Spleen (tissue), 13 donors: ENCODE measurements at regions of chr17 and their contacts with region 1.

Region 1: DNA sequence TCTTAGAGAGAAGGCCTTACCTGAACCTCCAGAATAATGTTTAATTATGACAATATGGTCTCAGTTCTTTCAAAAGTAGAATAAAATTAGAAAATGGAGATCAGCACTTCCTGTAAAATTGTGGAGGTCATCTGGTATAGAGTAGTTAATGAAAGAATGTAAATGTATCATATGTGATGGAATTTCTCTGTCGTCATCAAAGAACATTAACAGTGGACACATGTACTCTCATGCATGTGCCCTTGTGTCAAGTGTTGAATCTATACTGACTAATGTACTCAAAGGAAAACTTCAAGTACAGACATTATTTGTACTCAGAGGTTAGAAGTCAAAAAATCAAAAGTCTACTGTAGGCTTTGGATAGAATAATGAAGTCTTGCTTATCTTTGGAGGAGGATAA is 129.2 kb upstream of the MYOCD start:
- DNase-seq: no peak
- H3K4me3 ChIP-seq: no peak overlapping the region
- H3K27ac ChIP-seq: no peak overlapping the region
- H3K4me1 ChIP-seq: no peaks in the 10 kb centered on the region
- H3K27me3 ChIP-seq: no peaks in the 10 kb centered on the region
- CTCF ChIP-seq: no peak
- POLR2A ChIP-seq: no peak

Region 2: DNA sequence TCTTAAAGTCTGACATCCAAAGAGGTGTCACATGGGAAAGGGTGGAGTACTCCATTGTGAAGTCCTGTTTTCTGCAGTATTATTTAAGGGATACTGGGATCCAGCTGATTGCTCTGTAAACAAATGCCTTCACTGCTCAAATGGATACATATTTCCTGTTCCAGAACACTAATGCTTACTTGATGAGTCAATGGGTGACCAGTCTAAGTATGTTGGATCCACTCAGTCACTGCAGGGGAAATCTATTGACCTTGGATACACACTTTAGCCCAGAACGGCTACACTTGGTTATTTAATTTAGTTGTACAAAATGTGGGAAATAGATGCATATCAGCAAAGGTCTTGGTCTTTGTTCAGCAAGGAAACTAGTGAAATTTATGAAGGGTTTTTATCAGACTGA is 254.4 kb before region 1 on chr17:
- intact Hi-C with region 1: no loop called
- DNase-seq: no peak
- H3K4me3 ChIP-seq: no peak overlapping the region
- H3K27ac ChIP-seq: no peak overlapping the region
- H3K4me1 ChIP-seq: no peaks in the 10 kb centered on the region
- H3K27me3 ChIP-seq: no peaks in the 10 kb centered on the region
- CTCF ChIP-seq: no peak
- POLR2A ChIP-seq: no peak

Region 3: GRCh38 chr17:12613566-12613965 is 77.1 kb after region 1 on chr17:
- intact Hi-C with region 1: loop called (anchors 10 kb)
- DNase-seq: no peak
- H3K4me3 ChIP-seq: no peak overlapping the region
- H3K27ac ChIP-seq: no peak overlapping the region
- H3K4me1 ChIP-seq: no peaks in the 10 kb centered on the region
- H3K27me3 ChIP-seq: no peaks in the 10 kb centered on the region
- CTCF ChIP-seq: no peak
- POLR2A ChIP-seq: no peak